Heart left ventricle (tissue), 16 donors: ENCODE measurements at regions of chr19 and their contacts with region 1.

Region 1: GRCh38 chr19:55258828-55259539 is at the start of gene PPP6R1:
- DNase-seq: peak; percentile 97 to 98 (median 98)
- ATAC-seq: peak; percentile 94 to 97 (median 96)
- H3K4me3 ChIP-seq: peak within 1 kb of the TSS; percentile 76 to 99 (median 94)
- H3K27ac ChIP-seq: peak within 1 kb of the TSS; percentile 85 to 98 (median 94)
- H3K4me1 ChIP-seq: peaks cover 4 to 50% (median 43%) of the 10 kb centered on the region in 12 donors
- H3K27me3 ChIP-seq: no peaks in the 10 kb centered on the region
- CTCF ChIP-seq: no peak
- POLR2A ChIP-seq: peak in 1 of 2 donors; percentile 91
- total RNA-seq, gene PPP6R1: 28.6 to 59.9 (median 41.1) TPM

Region 2: GRCh38 chr19:55113570-55114039 is 145.4 kb before region 1 on chr19:
- intact Hi-C with region 1: no loop called
- DNase-seq: peak; percentile 85 to 97 (median 97)
- ATAC-seq: peak; percentile 60 to 77 (median 66)
- H3K4me3 ChIP-seq: peak overlapping the region in 8 of 12 donors; percentile 19 to 93 (median 31)
- H3K27ac ChIP-seq: peak overlapping the region; percentile 82 to 99 (median 96)
- H3K4me1 ChIP-seq: peaks cover 5 to 76% (median 47%) of the 10 kb centered on the region in 12 donors
- H3K27me3 ChIP-seq: no peaks in the 10 kb centered on the region
- CTCF ChIP-seq: no peak
- POLR2A ChIP-seq: peak; percentile 22 to 69

Region 3: DNA sequence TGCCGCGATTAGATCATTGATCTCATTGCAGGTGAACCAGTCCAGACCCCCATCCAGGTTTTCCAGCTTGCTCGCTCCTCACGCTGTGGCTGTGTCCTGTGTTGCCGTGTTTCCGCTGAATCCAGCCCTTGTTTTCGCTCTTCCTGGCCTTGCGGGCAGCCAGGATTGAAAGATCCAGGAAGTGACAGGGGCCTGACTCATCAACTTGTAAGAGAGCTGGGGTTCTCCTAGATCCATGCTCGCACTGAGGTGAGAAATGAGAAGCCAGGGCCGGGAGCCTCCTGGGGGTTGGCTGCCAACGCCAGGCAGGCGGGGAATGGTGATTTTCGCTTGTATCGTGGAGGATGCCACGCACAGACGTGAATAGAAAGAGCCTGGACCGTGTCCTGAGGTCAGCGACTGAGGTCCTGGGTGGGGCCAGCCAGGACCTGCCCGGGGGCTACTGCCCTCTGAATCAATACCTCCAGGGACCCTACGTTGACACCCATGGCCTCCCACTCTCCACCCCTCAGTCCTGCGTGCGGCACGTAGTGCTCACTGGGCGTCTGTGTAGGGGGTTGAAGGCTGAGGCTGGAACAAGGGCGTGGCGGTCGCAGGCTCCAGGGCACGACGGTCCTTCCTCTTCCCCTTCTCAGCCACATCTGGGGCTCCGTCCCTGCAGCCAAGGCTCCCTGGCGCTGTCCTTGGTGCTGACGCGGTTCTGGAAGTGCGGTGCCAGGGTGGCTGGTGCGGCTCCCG is 42.4 kb before region 1 on chr19:
- intact Hi-C with region 1: loop called in 4 of 10 experiments (anchors 2 to 5 kb)
- DNase-seq: peak; percentile 75 to 89 (median 85)
- ATAC-seq: peak; percentile 89 to 95 (median 92)
- H3K4me3 ChIP-seq: peak overlapping the region in 11 of 12 donors; percentile 7 to 60 (median 56)
- H3K27ac ChIP-seq: peak overlapping the region in 10 of 12 donors; percentile 30 to 89 (median 68)
- H3K4me1 ChIP-seq: peaks cover 0 to 16% (median 10%) of the 10 kb centered on the region in 12 donors
- H3K27me3 ChIP-seq: no peaks in the 10 kb centered on the region
- CTCF ChIP-seq: no peak
- POLR2A ChIP-seq: no peak

Region 4: DNA sequence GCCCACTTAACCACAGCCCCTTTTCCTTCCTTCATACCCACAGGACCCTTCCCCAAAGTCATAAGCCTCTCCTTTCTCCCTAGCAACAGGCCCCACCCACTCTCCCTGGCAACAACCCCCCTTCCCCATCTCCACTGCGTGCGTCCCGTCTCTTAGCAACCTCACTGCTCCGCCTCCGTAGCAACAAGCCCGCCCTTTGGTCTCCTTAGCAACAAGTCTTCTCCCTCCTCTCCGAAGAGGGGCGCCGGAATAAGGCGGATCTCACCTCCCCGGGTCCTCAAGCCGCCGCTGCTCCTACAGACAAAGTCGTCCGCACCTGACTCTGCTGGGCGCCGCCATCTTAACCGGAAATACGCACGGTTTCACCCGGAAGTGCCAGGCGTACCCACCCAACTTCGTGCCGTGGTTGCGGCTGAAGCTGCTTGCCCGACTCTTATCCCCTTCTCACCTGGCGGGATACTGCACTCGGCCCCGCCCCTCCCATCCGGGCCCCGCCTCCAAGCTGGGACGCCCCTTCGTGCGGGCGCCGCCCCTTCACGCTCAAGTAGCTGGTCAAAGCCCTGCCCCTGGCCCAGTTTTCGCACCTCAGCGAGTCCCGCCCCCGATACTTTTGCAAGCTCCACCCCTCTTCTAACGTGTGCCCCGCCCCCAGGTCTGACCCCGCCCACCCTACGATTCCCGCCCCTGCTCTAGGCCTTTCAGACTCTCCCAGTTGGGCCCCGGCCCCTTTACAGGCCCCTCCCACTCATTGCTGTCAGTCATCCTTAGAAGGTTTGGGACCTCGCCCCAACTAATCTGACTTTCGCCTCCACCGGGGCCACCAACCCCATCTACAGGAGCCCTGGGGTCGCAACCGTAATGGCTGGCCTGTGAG is 21.0 kb after region 1 on chr19 and contains the start of gene HSPBP1:
- intact Hi-C with region 1: loop called in 3 of 10 experiments (anchors 1 kb)
- DNase-seq: peak; percentile 88 to 94 (median 92)
- ATAC-seq: peak; percentile 87 to 94 (median 93)
- H3K4me3 ChIP-seq: peak within 1 kb of the TSS; percentile 58 to 91 (median 75)
- H3K27ac ChIP-seq: peak within 1 kb of the TSS; percentile 41 to 92 (median 84)
- H3K4me1 ChIP-seq: peaks cover 0 to 31% (median 11%) of the 10 kb centered on the region in 12 donors
- H3K27me3 ChIP-seq: no peaks in the 10 kb centered on the region
- CTCF ChIP-seq: no peak
- POLR2A ChIP-seq: peak in 1 of 2 donors; percentile 31
- total RNA-seq, gene HSPBP1: 25.7 to 42.0 (median 30.6) TPM

Region 5: DNA sequence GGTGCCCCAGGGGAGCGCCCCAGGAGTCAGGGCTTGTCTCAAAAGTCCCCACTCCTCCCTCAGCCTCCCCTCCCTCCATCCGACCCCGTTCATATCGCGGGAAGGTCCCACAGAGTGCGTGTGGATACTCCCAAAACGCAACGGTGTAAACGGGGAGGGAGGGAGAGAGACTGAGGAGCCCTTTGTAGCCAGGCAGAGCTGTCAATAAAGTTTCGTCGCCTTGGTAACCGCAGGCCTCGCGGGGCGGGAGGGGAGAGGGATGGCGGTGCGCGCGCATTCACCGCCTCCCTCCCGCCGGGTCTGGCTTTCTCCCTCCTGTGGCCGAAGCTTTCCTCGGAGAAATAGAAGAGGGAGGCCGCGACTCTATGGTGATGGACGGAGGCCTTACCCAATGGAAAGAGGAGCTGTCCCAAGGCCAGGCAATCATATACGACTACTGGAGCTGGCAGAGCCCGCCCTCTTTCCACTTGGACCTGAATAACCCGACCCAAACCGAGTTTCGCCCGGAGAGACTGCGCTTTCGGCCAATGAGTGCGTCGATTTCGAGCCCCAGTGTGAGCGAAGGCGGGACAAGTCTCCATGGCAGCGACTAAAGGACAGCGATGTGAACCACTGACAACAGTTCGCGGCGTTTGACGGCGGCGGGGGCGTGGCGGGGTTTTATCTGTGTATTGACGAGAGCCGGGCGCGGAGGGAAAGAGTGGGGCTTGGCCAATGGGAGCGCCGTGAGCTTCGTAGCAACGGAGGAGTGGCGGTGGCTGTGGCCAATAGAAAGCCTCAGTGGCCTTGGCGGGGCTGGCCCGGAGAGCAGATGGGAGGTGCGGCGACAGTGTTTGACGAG is 80.3 kb after region 1 on chr19 and contains the start of gene KMT5C:
- intact Hi-C with region 1: loop called in 2 of 10 experiments (anchors 1 kb)
- DNase-seq: peak; percentile 100
- ATAC-seq: peak; percentile 93 to 97 (median 96)
- H3K4me3 ChIP-seq: peak within 1 kb of the TSS; percentile 33 to 94 (median 72)
- H3K27ac ChIP-seq: peak within 1 kb of the TSS; percentile 75 to 94 (median 90)
- H3K4me1 ChIP-seq: peaks cover 0 to 29% (median 16%) of the 10 kb centered on the region in 12 donors
- H3K27me3 ChIP-seq: peaks cover 0 to 7% (median 0%) of the 10 kb centered on the region in 9 donors
- CTCF ChIP-seq: peak in 11 of 12 donors; percentile 12 to 66 (median 35)
- POLR2A ChIP-seq: peak in 1 of 2 donors; percentile 66
- total RNA-seq, gene KMT5C: 3.6 to 10.8 (median 7.2) TPM

Region 6: GRCh38 chr19:55461259-55461973 is 202.4 kb after region 1 on chr19 and contains the start of gene ISOC2:
- intact Hi-C with region 1: loop called in 1 of 10 experiments (anchors 1 kb)
- DNase-seq: peak; percentile 100
- ATAC-seq: peak; percentile 94 to 96 (median 96)
- H3K4me3 ChIP-seq: peak within 1 kb of the TSS; percentile 47 to 94 (median 82)
- H3K27ac ChIP-seq: peak within 1 kb of the TSS; percentile 63 to 97 (median 92)
- H3K4me1 ChIP-seq: peaks cover 0 to 24% (median 9%) of the 10 kb centered on the region in 12 donors
- H3K27me3 ChIP-seq: no peaks in the 10 kb centered on the region
- CTCF ChIP-seq: no peak
- POLR2A ChIP-seq: peak in 1 of 2 donors; percentile 27
- total RNA-seq, gene ISOC2: 36.9 to 102 (median 48.8) TPM